Brain microvascular endothelial cell (primary cell): ENCODE measurements at regions of chr15 and their contacts with region 1.

Region 1: DNA sequence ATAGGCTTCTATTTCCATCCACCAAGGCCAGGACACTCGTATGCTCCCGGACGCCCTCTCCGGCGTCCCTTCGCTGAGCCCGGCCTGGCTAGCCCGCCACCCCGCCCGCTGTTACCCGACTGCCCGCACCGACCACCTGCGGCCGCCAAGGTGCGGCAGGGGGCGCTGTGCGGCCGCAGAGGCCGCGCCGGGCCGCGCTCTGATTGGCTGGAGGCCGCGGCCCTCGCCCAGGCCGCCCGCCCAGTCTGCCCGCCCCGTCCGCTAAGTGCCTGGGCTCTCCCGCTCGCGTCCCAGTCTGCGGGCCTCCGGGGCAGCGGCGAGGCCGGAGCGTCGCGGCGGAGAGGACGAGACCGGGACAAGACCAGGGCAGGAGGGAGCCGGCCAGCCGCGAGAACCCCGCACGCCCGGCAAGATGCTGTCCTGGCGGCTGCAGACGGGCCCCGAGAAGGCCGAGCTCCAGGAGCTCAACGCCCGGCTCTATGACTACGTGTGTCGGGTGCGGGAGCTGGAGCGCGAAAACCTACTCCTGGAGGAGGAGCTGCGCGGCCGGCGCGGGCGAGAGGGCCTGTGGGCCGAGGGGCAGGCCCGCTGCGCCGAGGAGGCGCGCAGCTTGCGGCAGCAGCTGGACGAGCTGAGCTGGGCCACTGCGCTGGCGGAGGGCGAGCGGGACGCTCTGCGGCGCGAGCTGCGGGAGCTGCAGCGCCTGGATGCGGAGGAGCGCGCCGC is at the start of gene SYNM:
- DNase-seq: peak; percentile 39
- H3K4me3 ChIP-seq: peak within 1 kb of the TSS; percentile 51
- H3K27ac ChIP-seq: no peak within 1 kb of the TSS
- H3K27me3 ChIP-seq: no peaks in the 10 kb centered on the region
- CTCF ChIP-seq: peak; percentile 51

Region 2: GRCh38 chr15:98738689-98739401 is 366.1 kb before region 1 on chr15:
- in situ Hi-C with region 1: no loop called
- DNase-seq: no peak
- H3K4me3 ChIP-seq: no peak overlapping the region
- H3K27ac ChIP-seq: no peak overlapping the region
- H3K27me3 ChIP-seq: no peaks in the 10 kb centered on the region
- CTCF ChIP-seq: no peak

Region 3: DNA sequence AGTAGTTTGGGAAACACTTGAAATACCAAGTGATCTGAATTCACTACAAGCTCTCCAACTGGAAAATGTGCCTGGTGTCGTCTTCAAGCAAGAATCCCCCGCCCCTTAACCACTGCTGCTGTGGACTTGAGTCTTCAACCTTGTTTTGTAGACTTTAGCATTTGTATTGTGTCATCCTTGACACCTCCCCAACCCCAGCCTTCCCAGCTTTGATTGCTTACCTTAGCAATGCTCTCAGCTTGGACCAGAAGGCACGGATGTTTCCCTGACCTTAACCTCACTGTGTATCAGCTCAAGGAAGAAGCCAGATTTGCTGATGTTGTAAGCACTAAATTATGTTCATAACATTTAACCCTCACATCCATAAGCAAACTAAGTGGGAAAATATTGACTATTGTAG is 310.2 kb before region 1 on chr15:
- in situ Hi-C with region 1: no loop called
- DNase-seq: no peak
- H3K4me3 ChIP-seq: no peak overlapping the region
- H3K27ac ChIP-seq: no peak overlapping the region
- H3K27me3 ChIP-seq: no peaks in the 10 kb centered on the region
- CTCF ChIP-seq: no peak

Region 4: DNA sequence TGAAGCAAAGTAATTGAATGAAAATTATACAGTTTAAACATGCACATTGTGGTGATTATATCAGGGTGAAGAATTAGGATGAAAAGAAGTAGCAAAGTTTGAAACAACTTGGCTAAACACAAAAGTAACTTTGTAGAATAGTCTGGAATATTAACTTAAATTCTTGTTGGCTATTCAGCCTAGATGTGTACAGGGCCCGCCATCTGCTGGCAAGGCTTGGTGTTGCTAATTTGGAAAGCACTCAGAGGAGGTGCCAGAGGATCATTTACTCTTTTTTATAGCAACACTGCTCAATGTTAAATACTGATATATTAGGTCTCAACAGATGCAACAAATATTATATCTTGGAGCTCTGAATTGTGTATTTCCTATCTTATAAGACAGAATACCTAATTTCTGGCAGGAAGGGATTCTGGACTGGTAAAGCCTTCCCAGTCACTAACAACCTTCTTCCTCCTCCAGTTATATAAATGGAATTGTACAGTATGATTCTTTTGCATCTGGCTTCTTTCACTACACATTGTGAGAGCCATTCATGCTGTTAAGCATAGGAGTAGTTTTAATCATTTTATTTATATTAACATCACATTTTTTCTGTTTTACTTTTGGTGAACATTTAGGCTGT is 108.3 kb after region 1 on chr15:
- in situ Hi-C with region 1: loop called (anchors 25 kb)
- DNase-seq: peak; percentile 78
- H3K4me3 ChIP-seq: no peak overlapping the region
- H3K27ac ChIP-seq: no peak overlapping the region
- H3K27me3 ChIP-seq: no peaks in the 10 kb centered on the region
- CTCF ChIP-seq: peak; percentile 96

Region 5: GRCh38 chr15:99239545-99240198 is 134.7 kb after region 1 on chr15:
- in situ Hi-C with region 1: no loop called
- DNase-seq: peak; percentile 48
- H3K4me3 ChIP-seq: no peak overlapping the region
- H3K27ac ChIP-seq: peak overlapping the region; percentile 50
- H3K27me3 ChIP-seq: no peaks in the 10 kb centered on the region
- CTCF ChIP-seq: no peak